GM12878 (cell line): ENCODE measurements at regions of chr6 and their contacts with region 1.

Region 1: GRCh38 chr6:166786704-166787293 is 159.7 kb upstream of the RPS6KA2 start:
- DNase-seq: peak; percentile 21
- ATAC-seq: peak; percentile 83
- H3K4me3 ChIP-seq: no peak overlapping the region
- H3K27ac ChIP-seq: no peak overlapping the region
- H3K4me1 ChIP-seq: no peaks in the 10 kb centered on the region
- H3K27me3 ChIP-seq: no peaks in the 10 kb centered on the region
- CTCF ChIP-seq: peak; percentile 61 to 74 (median 64)
- EP300 ChIP-seq: no peak
- POLR2A ChIP-seq: no peak
- RAD21 ChIP-seq: peak; percentile 93

Region 2: DNA sequence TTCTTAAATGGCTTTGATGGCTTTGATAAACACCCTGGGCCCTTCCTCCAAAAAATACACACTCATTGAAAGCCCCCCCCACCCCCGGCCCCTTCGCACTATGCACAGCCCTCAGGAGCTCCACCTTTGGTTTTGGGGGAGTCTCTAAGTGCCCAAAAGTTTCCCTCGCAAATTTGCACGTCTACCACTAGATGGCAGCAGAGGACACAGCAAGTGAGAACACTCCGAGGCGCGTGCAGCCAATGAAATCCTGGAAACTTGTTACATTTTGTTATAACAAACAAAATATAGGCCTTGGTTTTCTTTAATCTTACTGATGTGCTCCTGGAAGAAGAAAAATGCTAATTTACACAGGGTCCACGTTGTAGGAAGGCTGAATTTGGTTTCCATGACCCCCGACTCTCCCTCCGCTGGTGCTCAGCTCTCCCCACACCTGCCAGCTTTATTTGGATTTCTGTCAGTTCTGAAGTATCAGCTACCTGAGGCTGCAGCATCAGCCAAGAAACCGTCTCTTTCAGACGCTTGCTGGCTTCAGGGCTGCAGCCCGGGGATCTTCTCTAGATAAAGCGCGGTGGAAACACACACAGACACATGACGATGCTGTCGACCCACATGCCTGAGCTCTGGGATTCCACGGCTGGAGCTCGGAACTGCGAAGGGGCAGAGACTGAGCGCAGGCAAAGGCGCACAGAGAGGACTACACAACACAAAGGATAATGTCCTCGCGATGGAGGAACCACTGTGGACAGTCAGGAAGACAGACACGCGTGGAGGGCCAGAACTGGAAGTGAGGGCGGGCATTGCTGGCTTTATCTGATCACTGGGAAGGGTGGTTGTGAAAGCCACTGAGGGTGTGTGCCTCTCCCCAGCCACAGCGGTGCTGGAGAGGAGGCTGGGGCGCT is 11.4 kb before region 1 on chr6:
- CTCF ChIA-PET with region 1: interaction called, 10 read pairs
- POLR2A ChIA-PET with region 1: no interaction called
- RAD21 ChIA-PET with region 1: interaction called, 9 read pairs
- SMC1A ChIA-PET with region 1: interaction called, 4 read pairs
- in situ Hi-C with region 1: no loop called
- intact Hi-C with region 1: no loop called
- DNase-seq: no peak
- ATAC-seq: peak; percentile 94
- H3K4me3 ChIP-seq: no peak overlapping the region
- H3K27ac ChIP-seq: no peak overlapping the region
- H3K4me1 ChIP-seq: no peaks in the 10 kb centered on the region
- H3K27me3 ChIP-seq: peaks cover 0 to 2% of the 10 kb centered on the region in 2 experiments; a peak in 1 of 4 replicates
- CTCF ChIP-seq: peak; percentile 84 to 91 (median 88)
- EP300 ChIP-seq: no peak
- POLR2A ChIP-seq: no peak
- RAD21 ChIP-seq: peak; percentile 96

Region 3: GRCh38 chr6:166809721-166810120 is 22.9 kb after region 1 on chr6:
- CTCF ChIA-PET with region 1: no interaction called
- POLR2A ChIA-PET with region 1: no interaction called
- RAD21 ChIA-PET with region 1: no interaction called
- SMC1A ChIA-PET with region 1: no interaction called
- in situ Hi-C with region 1: no loop called
- intact Hi-C with region 1: no loop called
- DNase-seq: no peak
- ATAC-seq: no peak
- H3K4me3 ChIP-seq: no peak overlapping the region
- H3K27ac ChIP-seq: no peak overlapping the region
- H3K4me1 ChIP-seq: no peaks in the 10 kb centered on the region
- H3K27me3 ChIP-seq: no peaks in the 10 kb centered on the region
- CTCF ChIP-seq: no peak
- EP300 ChIP-seq: no peak
- POLR2A ChIP-seq: no peak
- RAD21 ChIP-seq: no peak

Region 4: DNA sequence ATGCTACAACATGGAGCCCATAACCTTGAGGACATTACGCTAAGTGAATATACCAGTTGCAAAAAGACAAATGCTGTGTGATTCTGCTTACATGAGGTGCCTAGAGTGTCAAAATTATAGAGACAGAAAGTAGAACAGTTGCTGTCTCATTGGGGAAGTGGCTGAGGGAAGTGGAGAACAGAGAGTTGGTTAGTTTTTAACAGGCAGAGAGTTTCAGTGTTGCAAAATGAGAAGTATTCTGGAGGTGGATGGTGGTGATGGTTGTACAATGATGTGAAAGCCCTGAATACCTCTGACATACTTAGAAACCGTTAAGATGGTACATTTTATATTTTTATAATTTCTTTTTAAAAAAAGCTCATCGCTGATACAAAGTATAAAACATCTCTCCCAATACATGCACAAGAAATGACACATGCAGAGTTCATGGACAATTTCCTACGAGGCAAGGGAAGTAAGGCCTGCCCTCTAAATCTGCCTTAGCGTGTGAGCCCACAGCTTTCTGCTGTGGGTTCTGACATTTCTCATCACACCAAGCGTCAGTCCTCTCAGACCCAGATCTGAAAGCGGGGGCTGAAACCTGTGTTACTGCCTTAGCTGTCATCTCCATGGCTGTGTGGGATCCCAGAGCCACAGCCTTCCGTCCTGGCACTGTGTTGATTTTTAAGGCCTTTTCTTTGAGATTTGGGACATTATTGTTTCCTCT is 43.5 kb after region 1 on chr6:
- CTCF ChIA-PET with region 1: interaction called, 6 read pairs
- POLR2A ChIA-PET with region 1: interaction called, 4 read pairs
- RAD21 ChIA-PET with region 1: no interaction called
- SMC1A ChIA-PET with region 1: interaction called, 5 read pairs
- in situ Hi-C with region 1: no loop called
- intact Hi-C with region 1: loop called (anchors 5 kb)
- DNase-seq: peak; percentile 80
- ATAC-seq: peak; percentile 94
- H3K4me3 ChIP-seq: peak overlapping the region; percentile 3; the same call in 1 of the 2 replicates
- H3K27ac ChIP-seq: peak overlapping the region; percentile 99
- H3K4me1 ChIP-seq: peaks cover 19% of the 10 kb centered on the region
- H3K27me3 ChIP-seq: no peaks in the 10 kb centered on the region
- CTCF ChIP-seq: no peak
- EP300 ChIP-seq: peak; percentile 28 to 35; a peak in 2 of 4 replicates
- POLR2A ChIP-seq: no peak; the same call in 1 of the 2 replicates
- RAD21 ChIP-seq: no peak

Region 5: GRCh38 chr6:166862287-166862977 is 75.6 kb after region 1 on chr6:
- CTCF ChIA-PET with region 1: interaction called, 6 read pairs
- POLR2A ChIA-PET with region 1: no interaction called
- RAD21 ChIA-PET with region 1: interaction called, 6 read pairs
- SMC1A ChIA-PET with region 1: interaction called, 3 read pairs
- in situ Hi-C with region 1: no loop called
- intact Hi-C with region 1: loop called (anchors 1 kb)
- DNase-seq: no peak
- ATAC-seq: peak; percentile 76
- H3K4me3 ChIP-seq: peak overlapping the region; percentile 77
- H3K27ac ChIP-seq: no peak overlapping the region
- H3K4me1 ChIP-seq: no peaks in the 10 kb centered on the region; the same call in 1 of the 2 replicates
- H3K27me3 ChIP-seq: no peaks in the 10 kb centered on the region; a peak in 1 of 4 replicates
- CTCF ChIP-seq: peak; percentile 19 to 33 (median 30); a peak in 3 of 6 replicates
- EP300 ChIP-seq: no peak
- POLR2A ChIP-seq: no peak
- RAD21 ChIP-seq: peak; percentile 51

Region 6: GRCh38 chr6:166929542-166930189 is 142.9 kb after region 1 on chr6:
- CTCF ChIA-PET with region 1: no interaction called
- POLR2A ChIA-PET with region 1: no interaction called
- RAD21 ChIA-PET with region 1: no interaction called
- SMC1A ChIA-PET with region 1: no interaction called
- in situ Hi-C with region 1: loop called (anchors 5 kb)
- intact Hi-C with region 1: no loop called
- DNase-seq: no peak
- ATAC-seq: no peak
- H3K4me3 ChIP-seq: no peak overlapping the region
- H3K27ac ChIP-seq: no peak overlapping the region
- H3K4me1 ChIP-seq: no peaks in the 10 kb centered on the region
- H3K27me3 ChIP-seq: no peaks in the 10 kb centered on the region
- CTCF ChIP-seq: 0 out of 6 replicates have a peak, but pooled peaks of 1 of the 3 experiments have one; percentile 3
- EP300 ChIP-seq: no peak
- POLR2A ChIP-seq: no peak
- RAD21 ChIP-seq: no peak

Region 7: DNA sequence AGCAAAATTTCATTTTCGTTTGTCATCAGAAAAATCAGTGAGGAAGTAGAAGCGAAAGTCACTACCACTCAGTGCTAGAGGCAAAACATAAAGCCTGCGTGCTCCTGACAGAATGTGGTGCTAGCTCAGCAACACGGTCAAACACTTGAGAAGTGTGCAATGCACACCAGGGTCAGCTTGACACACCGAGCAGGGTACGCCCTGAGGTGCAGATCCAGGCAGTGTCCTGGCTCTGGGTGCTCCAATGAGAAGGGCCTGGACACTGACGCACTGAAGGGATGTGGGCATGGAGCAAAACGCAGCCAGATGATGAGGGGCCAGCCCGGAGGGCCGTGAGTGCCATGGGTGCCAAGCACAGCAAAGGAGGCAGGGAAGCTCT is 163.6 kb after region 1 on chr6:
- CTCF ChIA-PET with region 1: interaction called, 17 read pairs
- POLR2A ChIA-PET with region 1: interaction called, 3 read pairs
- RAD21 ChIA-PET with region 1: interaction called, 14 read pairs
- SMC1A ChIA-PET with region 1: interaction called, 9 read pairs
- in situ Hi-C with region 1: no loop called
- intact Hi-C with region 1: loop called (anchors 1 kb)
- DNase-seq: no peak
- ATAC-seq: peak; percentile 68
- H3K4me3 ChIP-seq: peak overlapping the region; percentile 71
- H3K27ac ChIP-seq: peak overlapping the region; percentile 96
- H3K4me1 ChIP-seq: peaks cover 42% of the 10 kb centered on the region
- H3K27me3 ChIP-seq: no peaks in the 10 kb centered on the region
- CTCF ChIP-seq: no peak
- EP300 ChIP-seq: no peak
- POLR2A ChIP-seq: peak; percentile 76
- RAD21 ChIP-seq: no peak